Right ventricle myocardium inferior (tissue), 1 donor: ENCODE measurements at regions of chr16 and their contacts with region 1.

Region 1: GRCh38 chr16:48164907-48165726 is 9.3 kb upstream of the ABCC12 start:
- DNase-seq: peak; percentile 87
- ATAC-seq: peak; percentile 92

Region 2: GRCh38 chr16:46947900-46948547 is 1217.1 kb before region 1 on chr16:
- intact Hi-C with region 1: loop called (anchors 5 kb)
- DNase-seq: no peak
- ATAC-seq: no peak

Region 3: DNA sequence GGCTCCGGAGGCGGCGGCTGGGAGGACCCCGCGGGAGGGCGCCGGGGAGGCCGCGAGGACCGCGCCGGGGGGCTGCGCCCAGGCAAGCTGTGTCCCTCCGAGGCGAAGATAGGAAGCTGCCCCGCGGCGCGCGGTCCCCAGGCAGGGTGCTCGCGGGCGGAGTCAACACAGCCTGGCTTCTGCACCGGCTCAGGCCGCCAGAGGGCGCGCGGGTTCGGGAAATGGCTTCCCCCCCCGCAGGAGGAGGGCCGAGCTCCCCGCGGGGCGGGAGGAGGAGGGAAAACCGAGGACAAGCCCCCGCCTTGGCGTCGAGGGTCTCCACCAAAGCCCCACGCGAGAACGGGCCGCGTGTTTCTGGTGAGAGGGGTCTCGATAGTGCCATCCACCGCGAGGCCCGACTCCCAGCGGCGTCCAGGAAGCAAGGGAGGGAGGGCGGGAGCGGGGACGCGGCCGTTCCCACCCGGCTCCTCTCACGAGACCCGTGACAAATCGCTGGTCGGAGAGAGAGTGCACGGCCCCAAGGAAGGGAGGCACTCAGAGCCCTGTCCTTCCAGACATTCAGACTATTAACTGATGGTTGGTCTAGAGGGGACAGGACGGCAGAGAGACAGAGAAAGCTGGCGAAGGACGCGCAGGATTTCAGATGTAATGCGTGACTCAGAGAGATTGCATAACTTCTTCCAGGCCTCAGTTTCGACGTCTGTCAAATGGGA is 1127.2 kb before region 1 on chr16:
- intact Hi-C with region 1: loop called (anchors 1 kb)
- DNase-seq: peak; percentile 96
- ATAC-seq: peak; percentile 97

Region 4: DNA sequence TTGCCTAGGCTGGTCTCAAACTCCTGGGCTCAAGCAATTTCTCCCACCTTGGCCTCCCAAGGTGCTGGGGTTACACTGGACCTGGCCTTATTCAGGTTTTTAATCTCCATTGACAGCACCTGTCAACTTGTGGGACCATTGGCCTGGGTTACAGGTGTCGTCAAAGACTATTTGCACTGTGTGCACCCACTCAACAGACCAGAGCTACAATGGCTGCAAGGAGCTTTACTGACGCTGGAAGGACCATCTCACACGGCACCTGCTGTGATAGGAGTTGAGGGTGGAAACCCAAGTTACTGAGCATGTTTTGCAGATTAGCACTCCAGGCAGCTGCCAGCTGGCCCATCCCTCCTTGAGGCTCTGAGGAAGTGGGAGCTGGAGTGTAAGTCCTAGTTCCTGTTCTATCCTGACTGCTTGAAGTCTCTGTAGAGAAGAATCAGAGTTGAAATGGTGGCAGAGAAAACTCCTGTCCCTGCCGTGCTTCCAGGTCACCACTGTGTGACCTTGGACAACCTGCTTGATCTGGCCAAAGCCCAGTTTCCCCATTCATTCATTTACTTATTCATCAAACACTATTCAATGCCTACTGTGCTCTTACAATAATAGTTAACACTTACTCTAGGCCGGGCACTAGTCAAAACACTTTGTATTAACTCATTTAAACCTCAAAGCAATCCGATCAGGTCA is 36.5 kb after region 1 on chr16:
- intact Hi-C with region 1: no loop called
- DNase-seq: no peak
- ATAC-seq: no peak

Region 5: DNA sequence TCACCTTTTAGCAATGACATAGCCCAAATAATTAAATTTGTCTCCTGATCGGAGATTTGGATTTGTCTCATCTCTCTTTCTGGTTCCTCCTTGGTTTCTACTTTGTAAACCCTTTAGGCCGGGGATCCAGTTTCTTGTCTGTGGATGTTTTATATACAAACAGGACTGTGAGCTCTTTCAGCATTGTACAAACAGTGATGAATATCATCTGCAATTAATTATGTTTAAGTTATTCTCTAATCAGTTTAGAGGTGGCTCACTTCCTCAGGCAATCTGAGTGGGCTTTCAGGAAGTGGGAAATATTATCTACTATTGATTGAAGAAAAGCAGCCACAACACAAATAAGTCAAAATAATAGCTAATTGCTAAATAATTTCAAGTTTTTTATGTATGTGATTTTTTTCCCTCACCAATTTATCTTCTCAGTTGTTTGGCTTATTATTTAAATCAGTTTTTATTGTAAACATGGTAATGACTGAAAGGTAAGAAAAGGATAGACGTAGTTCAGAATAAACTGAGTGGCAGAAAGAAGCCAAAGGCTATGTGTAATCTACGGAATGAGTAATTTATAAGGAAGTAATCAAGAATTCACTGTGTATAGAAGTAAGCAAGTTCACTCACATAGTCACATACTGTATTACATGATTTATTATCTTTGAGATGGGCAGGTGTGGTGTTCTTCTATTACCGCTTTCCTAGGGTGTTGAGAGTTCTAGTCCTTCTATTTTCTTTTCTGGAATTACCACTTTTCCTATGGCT is 85.6 kb after region 1 on chr16:
- intact Hi-C with region 1: no loop called
- DNase-seq: no peak
- ATAC-seq: no peak